ENCODE measurements at regions of chr7 and their contacts with region 1.

Region 1: DNA sequence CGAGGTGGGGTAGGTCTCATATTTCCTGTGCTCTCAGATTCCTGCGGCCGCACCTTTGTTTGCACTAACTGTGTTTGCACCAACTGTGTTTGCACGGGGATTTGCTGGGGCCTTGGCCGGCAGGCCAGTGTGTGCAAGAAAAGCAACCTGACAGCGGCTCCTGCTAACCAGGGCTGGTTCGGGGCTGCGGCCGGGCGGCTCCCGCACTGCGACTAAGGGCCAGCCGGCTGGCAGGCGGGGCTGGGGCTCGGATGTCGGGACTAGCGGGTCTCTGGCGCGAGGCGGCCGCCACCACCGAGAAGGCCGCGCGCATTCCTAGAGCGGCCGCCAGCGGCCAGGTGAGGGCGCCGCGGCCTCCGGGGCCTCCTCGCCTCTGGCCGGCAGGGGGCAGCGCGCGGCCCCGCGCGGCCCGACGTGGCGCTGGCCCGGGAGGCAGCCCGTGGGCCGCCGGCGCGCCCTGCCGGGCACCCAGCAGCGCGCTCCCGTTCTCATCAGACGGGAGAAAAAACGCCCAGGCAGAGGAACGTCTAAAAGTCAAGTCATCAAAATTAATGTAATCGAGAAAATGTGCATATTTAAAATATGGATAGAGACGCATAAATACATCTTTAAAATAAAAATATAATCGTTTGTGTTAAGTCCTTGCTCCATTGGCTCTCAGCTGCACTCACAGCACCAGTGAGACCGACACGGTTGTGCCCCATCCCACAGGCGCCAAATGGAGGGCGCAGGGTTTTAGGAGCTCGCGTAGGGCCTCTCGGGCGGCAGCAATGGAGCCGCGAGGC is 38.5 kb downstream of the ZNF777 start:
- DNase-seq: peak; percentile 33 to 93 (median 69)
- ATAC-seq: peak; percentile 92
- H3K4me3 ChIP-seq: peak overlapping the region; percentile 75
- H3K4me3 Mint-ChIP-seq: peak overlapping the region; percentile 70
- H3K27ac ChIP-seq: peak overlapping the region; percentile 16 to 76
- H3K27ac Mint-ChIP-seq: peak overlapping the region; percentile 68
- H3K4me1 ChIP-seq: peaks cover 17% of the 10 kb centered on the region
- H3K4me1 Mint-ChIP-seq: no peaks in the 10 kb centered on the region
- H3K27me3 ChIP-seq: no peaks in the 10 kb centered on the region
- H3K27me3 Mint-ChIP-seq: no peaks in the 10 kb centered on the region
- CTCF ChIP-seq: peak; percentile 29

Region 2: GRCh38 chr7:148944935-148945934 is 477.1 kb before region 1 on chr7:
- CTCF ChIA-PET with region 1: no interaction called
- POLR2A ChIA-PET with region 1: no interaction called
- intact Hi-C with region 1: no loop called
- DNase-seq: no peak
- ATAC-seq: no peak
- H3K4me3 ChIP-seq: no peak overlapping the region
- H3K4me3 Mint-ChIP-seq: no peak overlapping the region
- H3K27ac ChIP-seq: no peak overlapping the region
- H3K27ac Mint-ChIP-seq: no peak overlapping the region
- H3K4me1 ChIP-seq: peaks cover 7% of the 10 kb centered on the region
- H3K4me1 Mint-ChIP-seq: peaks cover 15% of the 10 kb centered on the region
- H3K27me3 ChIP-seq: no peaks in the 10 kb centered on the region
- H3K27me3 Mint-ChIP-seq: no peaks in the 10 kb centered on the region
- CTCF ChIP-seq: no peak

Region 3: DNA sequence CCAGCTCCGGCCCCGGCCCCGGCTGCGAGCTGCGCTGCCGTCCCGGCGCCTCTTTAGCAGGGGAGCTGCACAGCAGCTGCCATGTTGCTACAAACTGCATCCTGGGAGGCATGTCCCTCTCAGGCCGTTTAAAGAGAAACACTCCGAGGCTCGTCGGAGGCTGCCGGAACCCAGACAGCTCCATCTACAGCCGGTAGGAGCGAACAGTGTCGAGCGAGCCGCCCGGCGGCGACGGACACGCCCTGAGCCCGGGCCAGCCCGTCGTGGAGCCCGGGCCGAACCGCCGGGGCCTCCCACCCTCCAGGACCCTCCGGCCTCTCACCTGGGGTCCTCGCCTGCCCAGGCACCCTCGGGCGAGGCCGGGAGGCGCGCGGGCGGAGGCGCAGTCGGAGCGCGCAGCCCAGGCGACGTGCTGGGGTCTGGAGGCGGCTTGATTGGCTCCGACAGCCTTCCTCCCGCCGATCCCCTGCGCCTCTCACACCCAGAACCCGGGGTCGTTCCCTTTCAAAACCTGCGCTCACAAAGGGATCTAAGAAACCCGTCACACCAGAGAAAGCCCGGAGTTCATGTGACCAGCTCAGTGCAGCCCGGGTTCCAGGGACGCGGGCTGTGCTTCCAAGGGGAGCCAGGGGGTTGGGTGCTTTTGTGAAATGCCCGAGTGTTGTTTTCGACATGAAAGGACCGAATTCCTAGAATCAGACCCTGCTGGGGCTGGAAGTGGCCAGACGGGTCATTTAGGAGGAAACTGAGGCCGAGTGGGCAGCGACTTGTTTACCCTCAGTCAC is 38.4 kb after region 1 on chr7 and contains the start of gene ZNF777:
- CTCF ChIA-PET with region 1: interaction called, 18 read pairs
- POLR2A ChIA-PET with region 1: interaction called, 20 read pairs
- intact Hi-C with region 1: loop called (anchors 1 to 5 kb)
- DNase-seq: peak; percentile 70 to 92 (median 78)
- ATAC-seq: peak; percentile 99
- H3K4me3 ChIP-seq: peak within 1 kb of the TSS; percentile 74
- H3K4me3 Mint-ChIP-seq: peak within 1 kb of the TSS; percentile 92
- H3K27ac ChIP-seq: peak within 1 kb of the TSS in 1 of 2 donors; percentile 52
- H3K27ac Mint-ChIP-seq: peak within 1 kb of the TSS; percentile 70
- H3K4me1 ChIP-seq: peaks cover 25% of the 10 kb centered on the region
- H3K4me1 Mint-ChIP-seq: peaks cover 33% of the 10 kb centered on the region
- H3K27me3 ChIP-seq: peaks cover 0 to 5% of the 10 kb centered on the region in 2 experiments
- H3K27me3 Mint-ChIP-seq: peaks cover 15% of the 10 kb centered on the region
- CTCF ChIP-seq: peak; percentile 49
- total RNA-seq, gene ZNF777: 14.5 to 14.8 TPM

Measured in CD4-positive, alpha-beta T cell (primary cell).